BJ (cell line): ENCODE measurements at regions of chr11 and their contacts with region 1.

Region 1: DNA sequence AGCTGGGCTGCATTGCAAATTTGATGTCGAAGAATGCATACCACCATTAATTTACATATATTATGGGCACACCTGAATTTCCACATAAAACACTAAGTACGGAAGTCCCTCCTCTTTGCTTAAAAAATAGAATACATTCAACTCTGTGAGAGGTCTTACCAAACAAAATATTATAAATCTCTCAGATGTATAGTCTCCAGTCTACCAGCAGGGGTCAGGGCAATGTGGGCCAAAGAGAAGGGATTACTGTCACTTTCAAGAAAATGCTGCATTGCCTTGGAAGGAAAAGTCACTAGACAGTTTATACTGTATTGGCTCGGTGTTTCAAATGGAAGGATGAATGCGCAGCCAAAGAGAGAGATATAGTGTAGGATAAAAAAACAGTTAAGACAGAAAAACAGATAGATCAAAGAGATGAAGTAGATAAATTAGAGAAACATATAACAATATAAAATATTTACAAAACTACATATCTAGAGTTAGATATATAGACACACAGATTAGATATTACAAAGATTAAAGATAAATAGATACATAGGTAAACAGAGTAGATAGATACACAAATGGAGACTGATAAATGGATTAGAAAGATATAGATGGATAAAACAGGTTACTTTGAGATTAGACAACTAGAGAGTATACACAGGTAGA is 20.9 kb downstream of the SERGEF start:
- DNase-seq: no peak
- H3K4me3 ChIP-seq: no peak overlapping the region
- H3K27me3 ChIP-seq: no peaks in the 10 kb centered on the region
- CTCF ChIP-seq: peak; percentile 89

Region 2: GRCh38 chr11:18105802-18106574 is 114.1 kb after region 1 on chr11 and contains the start of gene SAAL1:
- CTCF ChIA-PET with region 1: interaction called, 13 read pairs
- POLR2A ChIA-PET with region 1: no interaction called
- DNase-seq: no peak
- H3K4me3 ChIP-seq: peak within 1 kb of the TSS; percentile 96
- H3K27me3 ChIP-seq: no peaks in the 10 kb centered on the region; the same call in 1 of the 2 replicates
- CTCF ChIP-seq: peak; percentile 75
- polyA plus RNA-seq, gene SAAL1: 8.9 and 13.3 TPM in 2 replicates